Activated T-helper 1 cell treated with anti-CD3 and anti-CD28 coated beads, Interleukin-12 subunit alpha, Interleukin-12 subunit beta, Interleukin-2, Interleukin-4 antibody, amounts not matched to agents 30 ng/mL and 10 ng/mL and 1 ng/mL, durations not matched to agents 14 hours and 24 hours and 36 hours (primary cell): ENCODE measurements at regions of chr12 and their contacts with region 1.

Region 1: DNA sequence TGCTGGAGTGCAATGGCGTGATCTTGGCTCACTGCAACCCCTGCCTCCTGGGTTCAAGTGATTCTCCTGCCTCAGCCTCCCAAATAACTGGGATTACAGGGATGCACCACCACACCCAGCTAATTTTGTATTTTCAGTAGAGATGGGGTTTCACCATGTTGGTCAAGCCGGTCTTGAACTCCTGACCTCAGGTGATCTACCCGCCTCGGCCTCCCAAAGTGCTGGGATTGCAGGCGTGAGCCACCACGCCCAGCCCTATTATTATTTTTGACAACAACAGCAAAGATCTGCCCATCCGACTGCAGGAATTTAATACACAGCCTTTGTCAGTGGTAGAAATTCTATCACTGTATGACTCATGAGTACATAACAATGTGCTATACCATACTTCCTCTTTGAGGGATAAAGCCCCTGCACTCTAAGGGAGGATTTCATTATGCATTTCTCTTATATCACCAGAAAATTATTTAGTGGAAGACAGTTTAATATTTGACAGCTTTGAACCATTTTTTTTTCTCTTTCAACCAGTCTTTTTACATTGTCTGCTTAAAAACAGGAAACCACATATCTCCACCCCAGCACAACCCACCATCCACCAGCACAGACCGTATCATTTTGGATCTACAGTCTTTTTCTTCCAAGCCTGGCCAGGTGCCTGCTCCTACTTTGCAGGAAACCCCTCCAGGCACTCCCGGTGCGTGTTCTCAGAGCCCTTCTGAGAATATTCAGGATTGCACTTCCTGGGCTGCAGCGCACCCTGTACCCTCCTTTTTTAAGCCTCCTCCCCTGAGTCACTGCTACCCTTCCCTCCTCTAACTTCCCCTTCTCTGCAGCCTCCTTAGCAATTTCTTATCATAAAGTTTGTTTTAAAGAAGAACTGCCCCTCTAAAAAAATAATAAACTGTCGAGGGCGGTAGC is 594 bp downstream of the ARHGDIB start:
- DNase-seq: peak; percentile 34
- H3K4me3 Mint-ChIP-seq: peak overlapping the region; percentile 97
- H3K27ac Mint-ChIP-seq: peak overlapping the region; percentile 97
- H3K4me1 Mint-ChIP-seq: peaks cover 68% of the 10 kb centered on the region
- H3K27me3 Mint-ChIP-seq: no peaks in the 10 kb centered on the region

Region 2: DNA sequence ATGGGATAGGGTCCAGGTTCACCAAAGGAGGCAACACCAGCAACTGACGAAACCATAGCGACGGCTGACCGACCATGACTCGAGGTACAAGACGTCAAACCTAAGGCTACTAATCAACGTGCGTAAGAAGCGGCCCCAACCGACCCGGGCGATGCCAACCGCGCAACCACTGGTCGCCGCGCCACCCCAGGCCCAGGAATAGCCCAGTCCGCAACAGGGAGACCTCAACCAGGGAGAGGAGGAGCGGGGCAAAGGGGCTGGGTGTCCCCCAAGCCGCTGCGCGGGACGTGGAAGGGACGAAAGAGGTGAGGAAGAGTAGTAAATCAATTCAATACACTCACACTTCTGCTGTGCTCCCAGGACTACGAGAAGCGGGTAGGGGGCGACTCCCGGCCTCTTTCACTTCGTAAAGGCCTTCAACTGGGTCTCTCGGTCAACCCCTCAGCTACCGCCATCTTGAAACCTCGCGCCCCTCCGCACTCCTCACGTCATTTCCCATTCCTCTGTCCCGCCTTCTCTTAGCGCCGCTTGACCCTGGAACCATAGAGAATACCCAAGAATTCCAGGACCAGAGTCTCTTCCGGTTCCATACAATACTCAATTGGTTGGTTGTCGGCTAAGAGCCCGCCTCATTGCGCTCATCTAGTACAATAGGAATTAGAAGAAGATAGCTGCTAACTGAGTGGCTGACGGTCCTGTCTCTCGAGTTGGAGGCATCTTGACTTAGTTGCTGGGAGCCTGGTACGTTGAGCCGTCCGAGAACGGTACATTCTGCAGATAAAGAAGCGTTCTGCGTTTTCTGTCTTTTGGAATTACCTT is 157.6 kb before region 1 on chr12 and contains the starts of genes C12orf60 and WBP11:
- intact Hi-C with region 1: loop called (anchors 1 kb)
- DNase-seq: peak; percentile 84
- H3K4me3 Mint-ChIP-seq: no peak within 1 kb of the TSS
- H3K27ac Mint-ChIP-seq: no peak within 1 kb of the TSS
- H3K4me1 Mint-ChIP-seq: peaks cover 22% of the 10 kb centered on the region
- H3K27me3 Mint-ChIP-seq: no peaks in the 10 kb centered on the region
- total RNA-seq, gene C12orf60: 2.1 and 2.2 TPM in 2 replicates
- total RNA-seq, gene WBP11: 128 and 142 TPM in 2 replicates

Region 3: DNA sequence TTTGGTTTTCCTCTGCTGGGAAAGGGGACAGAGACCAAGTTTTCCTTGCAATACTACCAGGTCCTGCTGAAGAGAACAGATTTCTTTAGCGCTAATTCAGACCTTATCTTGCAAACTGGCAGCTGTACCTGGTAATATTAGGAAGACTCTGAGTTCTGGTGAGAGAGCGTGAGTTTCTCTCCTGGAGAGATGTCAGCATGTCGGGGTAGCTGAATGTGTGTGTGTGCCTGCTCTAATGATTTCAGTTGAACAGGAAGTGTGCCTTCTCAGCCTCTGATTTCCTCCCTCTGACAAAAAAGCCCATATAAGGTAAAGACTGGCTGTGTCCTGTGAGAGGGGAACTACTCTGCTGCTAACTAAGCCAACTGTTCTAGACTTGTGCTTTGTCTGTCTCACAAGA is 12.1 kb before region 1 on chr12:
- intact Hi-C with region 1: loop called (anchors 1 kb)
- DNase-seq: peak; percentile 49
- H3K4me3 Mint-ChIP-seq: peak overlapping the region; percentile 79
- H3K27ac Mint-ChIP-seq: peak overlapping the region; percentile 99
- H3K4me1 Mint-ChIP-seq: peaks cover 90% of the 10 kb centered on the region
- H3K27me3 Mint-ChIP-seq: no peaks in the 10 kb centered on the region

Region 4: GRCh38 chr12:15575671-15576541 is 615.1 kb after region 1 on chr12:
- intact Hi-C with region 1: loop called (anchors 5 kb)
- DNase-seq: no peak
- H3K4me3 Mint-ChIP-seq: peak overlapping the region; percentile 12
- H3K27ac Mint-ChIP-seq: peak overlapping the region; percentile 88
- H3K4me1 Mint-ChIP-seq: peaks cover 64% of the 10 kb centered on the region
- H3K27me3 Mint-ChIP-seq: no peaks in the 10 kb centered on the region

Region 5: DNA sequence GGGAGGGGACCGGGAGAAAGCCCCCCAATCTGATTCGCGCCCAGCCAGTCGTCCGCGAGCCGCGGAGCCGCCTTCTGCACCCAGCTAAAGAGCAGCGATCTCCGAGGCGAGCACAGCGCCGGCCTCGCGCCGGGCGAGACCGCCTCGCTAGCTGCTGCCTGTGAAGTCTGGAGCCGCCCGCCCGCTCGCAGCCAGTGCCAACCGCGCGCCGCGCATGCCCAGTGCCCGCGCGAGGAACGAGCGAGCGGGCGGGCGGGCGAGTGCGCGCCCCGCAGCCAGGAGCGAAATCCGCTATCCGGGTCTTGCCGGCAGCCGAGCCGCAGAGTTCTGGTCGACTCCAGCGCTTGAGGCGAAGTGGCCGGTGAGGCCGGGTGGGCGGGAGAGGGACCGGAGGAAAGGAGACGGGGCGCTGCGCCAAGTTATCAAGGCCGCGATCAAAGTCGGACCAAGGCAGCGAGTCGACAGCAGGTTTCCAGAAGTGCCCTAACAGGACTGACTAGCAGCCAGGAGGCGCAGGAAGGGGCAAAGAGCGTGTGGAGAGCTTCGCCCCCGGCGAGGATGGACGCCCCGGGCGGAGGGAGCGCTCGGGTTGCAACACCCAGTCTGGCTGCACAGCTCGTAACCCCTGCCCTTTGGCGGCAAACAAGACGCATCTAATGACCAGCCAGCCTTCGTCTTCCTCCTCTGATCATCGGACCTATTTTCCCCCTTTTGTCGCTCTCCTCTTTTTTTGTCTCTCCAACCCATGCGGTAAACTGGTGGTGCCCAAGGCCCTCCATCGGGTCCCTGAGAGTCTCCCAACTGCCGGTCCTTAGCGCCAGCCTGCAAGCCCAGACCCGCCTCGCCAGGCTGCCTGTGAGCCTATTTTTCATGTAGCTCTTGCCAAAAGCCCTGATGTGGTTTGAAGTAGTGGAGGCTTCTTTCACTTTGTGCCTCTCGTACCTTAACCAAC is 828.7 kb after region 1 on chr12 and contains the start of gene EPS8:
- intact Hi-C with region 1: loop called (anchors 10 kb)
- DNase-seq: peak; percentile 83
- H3K4me3 Mint-ChIP-seq: peak within 1 kb of the TSS; percentile 91
- H3K27ac Mint-ChIP-seq: peak within 1 kb of the TSS; percentile 81
- H3K4me1 Mint-ChIP-seq: peaks cover 19% of the 10 kb centered on the region
- H3K27me3 Mint-ChIP-seq: peaks cover 73% of the 10 kb centered on the region
- total RNA-seq, gene EPS8: 1.9 and 3.1 TPM in 2 replicates